ENCODE measurements at regions of chr9 and their contacts with region 1.

Region 1: DNA sequence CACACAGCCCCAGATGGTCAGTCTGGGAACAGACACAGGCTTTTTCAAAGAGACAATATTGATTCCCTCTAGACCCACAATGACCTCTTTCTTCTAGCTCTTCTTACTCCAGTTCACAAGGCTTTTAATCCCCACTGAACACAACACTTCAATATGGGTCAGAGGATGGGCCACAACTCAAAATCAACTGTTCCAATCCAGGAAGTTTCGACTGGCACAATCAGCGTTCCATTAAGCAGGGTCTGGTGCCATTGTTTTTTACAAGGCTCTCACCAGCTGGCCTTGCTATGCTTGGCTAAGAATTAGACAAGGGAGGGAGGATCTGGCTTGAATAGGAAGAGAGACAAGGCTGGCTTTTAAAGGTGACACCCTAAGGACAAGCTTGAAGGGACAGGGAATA is 199.4 kb upstream of the SLC24A2 start:
- DNase-seq: peak in 2 of 10 donors; percentile 13 to 41
- H3K4me3 ChIP-seq: no peak overlapping the region
- H3K27ac ChIP-seq: no peak overlapping the region
- H3K27me3 ChIP-seq: peaks cover 0 to 35% (median 0%) of the 10 kb centered on the region in 45 donors
- CTCF ChIP-seq: peak in 1 of 56 donors; percentile 11

Region 2: GRCh38 chr9:19895006-19895405 is 93.3 kb before region 1 on chr9:
- intact Hi-C with region 1: no loop called
- DNase-seq: no peak
- H3K4me3 ChIP-seq: no peak overlapping the region
- H3K27ac ChIP-seq: peak overlapping the region in 21 of 59 donors; percentile 0 to 60 (median 20)
- H3K27me3 ChIP-seq: no peaks in the 10 kb centered on the region
- CTCF ChIP-seq: no peak

Region 3: GRCh38 chr9:20028849-20029231 is 40.6 kb after region 1 on chr9:
- intact Hi-C with region 1: loop called in 1 of 2 experiments (anchors 5 kb)
- DNase-seq: no peak
- H3K4me3 ChIP-seq: no peak overlapping the region
- H3K27ac ChIP-seq: no peak overlapping the region
- H3K27me3 ChIP-seq: no peaks in the 10 kb centered on the region
- CTCF ChIP-seq: no peak

Measured in dorsolateral prefrontal cortex (tissue), 120 donors.